ENCODE measurements at regions of chr4 and their contacts with region 1.

Region 1: GRCh38 chr4:10535912-10536311 is 78.7 kb upstream of the ZNF518B start:
- DNase-seq: no peak
- H3K4me3 ChIP-seq: no peak overlapping the region
- H3K27ac ChIP-seq: no peak overlapping the region
- H3K4me1 ChIP-seq: no peaks in the 10 kb centered on the region
- H3K27me3 ChIP-seq: no peaks in the 10 kb centered on the region
- CTCF ChIP-seq: no peak
- POLR2A ChIP-seq: no peak

Region 2: DNA sequence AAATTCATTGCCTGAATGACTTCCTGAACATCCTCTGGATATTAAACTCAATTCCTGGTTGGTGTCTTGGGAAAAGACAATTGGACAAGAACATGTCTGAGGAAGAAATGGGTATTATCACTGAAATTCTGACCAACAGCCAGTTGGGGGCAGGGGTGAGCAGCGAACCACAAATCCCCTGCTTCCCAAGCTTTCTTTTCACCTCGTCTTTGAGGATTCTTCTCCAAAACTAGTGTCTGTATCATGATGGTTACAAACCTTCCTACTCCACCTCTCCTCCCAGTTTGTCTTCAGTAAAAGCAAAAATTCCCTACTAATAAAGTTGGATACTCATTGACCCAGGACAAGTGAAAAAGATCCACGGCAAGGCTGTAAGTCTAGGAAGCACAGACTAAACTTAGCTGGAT is 371.0 kb before region 1 on chr4:
- intact Hi-C with region 1: loop called (anchors 5 kb)
- DNase-seq: peak; percentile 16
- H3K4me3 ChIP-seq: no peak overlapping the region
- H3K27ac ChIP-seq: no peak overlapping the region
- H3K4me1 ChIP-seq: no peaks in the 10 kb centered on the region
- H3K27me3 ChIP-seq: no peaks in the 10 kb centered on the region
- CTCF ChIP-seq: peak in 3 of 4 experiments; percentile 33 to 69 (median 57)
- POLR2A ChIP-seq: no peak

Region 3: DNA sequence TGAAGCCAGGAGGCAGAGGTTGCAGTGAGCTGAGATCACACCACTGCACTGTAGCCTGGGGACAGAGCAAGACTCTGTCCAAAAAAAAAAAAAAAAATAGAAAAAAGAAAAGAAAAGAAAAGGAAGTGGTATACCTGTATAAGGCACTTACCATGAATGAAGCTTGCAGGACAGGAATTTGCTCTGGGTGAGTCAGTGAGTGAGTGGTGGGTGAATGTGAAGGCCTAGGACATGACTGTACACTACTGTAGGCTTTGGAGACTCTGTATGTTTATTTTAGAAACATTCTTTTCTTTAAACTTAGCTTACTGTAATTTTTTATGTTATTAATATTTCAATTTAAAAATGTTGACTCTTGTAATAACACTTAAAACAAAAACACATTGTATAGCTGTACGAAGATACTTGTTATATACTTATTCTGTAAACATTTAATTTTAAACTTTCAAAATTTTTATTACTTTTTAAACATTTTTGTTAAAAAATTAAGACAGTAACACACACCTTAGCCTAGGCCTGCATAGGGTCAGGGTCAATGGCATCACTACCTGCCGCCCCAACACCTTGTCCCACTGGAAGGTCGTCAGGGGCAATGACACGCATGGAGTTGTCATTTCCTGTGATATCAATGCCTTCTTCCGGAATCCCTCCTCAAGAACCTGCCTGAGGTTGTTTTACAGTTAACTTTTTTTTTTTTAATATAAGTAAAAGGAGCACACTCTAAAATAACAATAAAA is 70.0 kb after region 1 on chr4:
- intact Hi-C with region 1: no loop called
- DNase-seq: no peak
- H3K4me3 ChIP-seq: no peak overlapping the region
- H3K27ac ChIP-seq: no peak overlapping the region
- H3K4me1 ChIP-seq: no peaks in the 10 kb centered on the region
- H3K27me3 ChIP-seq: no peaks in the 10 kb centered on the region
- CTCF ChIP-seq: no peak
- POLR2A ChIP-seq: no peak